HEK293T (cell line): ENCODE measurements at regions of chr18 and their contacts with region 1.

Region 1: GRCh38 chr18:22348521-22349316 is 69.0 kb downstream of the CTAGE1 start:
- DNase-seq: peak; percentile 57

Region 2: DNA sequence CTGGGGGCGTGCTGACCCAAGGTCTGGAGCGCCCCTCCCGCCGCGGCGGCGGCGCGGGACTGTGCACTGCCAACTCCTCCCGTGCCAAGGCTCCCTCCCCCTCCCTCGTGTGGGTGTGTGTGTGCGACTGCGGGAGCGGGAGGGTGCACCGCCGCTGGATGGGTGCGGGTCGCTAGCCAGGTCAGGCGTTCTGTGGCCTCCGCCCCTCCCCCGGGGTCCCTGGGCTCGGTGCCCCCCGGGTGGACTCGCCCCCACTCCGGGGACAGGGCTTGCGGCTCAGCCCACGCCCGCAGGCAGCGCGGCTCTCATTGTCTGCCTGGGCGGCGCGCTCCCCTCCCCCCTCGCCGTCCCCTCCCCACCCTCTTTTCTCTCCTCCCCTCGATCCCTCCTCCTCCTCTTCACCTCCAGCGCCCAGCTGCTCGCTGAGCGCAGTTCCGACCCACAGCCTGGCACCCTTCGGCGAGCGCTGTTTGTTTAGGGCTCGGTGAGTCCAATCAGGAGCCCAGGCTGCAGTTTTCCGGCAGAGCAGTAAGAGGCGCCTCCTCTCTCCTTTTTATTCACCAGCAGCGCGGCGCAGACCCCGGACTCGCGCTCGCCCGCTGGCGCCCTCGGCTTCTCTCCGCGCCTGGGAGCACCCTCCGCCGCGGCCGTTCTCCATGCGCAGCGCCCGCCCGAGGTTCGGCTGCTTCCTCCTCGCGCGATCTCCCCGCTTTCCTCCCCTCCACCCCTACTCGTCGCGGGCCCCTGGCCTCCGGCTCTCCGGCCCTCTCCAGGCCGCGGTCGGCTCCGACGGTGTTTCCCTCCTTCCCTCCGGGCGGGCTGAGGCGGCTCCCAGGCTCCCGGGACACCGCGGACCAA is 179.5 kb before region 1 on chr18 and contains the start of gene GATA6:
- CTCF ChIA-PET with region 1: no interaction called
- POLR2A ChIA-PET with region 1: interaction called, 15 read pairs
- DNase-seq: peak; percentile 90

Region 3: DNA sequence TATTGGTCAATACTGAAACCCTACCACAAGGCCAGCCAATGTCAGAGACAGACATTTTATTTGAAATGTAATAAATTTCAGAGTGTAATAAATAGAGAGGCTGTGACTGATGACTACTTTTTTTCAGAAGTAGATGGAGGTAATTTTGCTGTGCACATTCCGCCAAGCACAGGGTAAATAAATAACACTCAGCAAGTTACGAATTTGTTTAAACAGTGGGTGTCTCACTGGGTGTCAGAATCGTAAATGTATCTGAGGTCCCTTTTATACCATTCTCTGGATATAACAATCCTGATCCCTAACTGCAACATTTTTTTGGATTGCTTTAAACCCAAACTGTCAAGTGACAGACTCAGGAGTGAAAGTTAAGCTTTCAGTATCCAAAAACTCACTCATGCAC is 105.2 kb before region 1 on chr18:
- CTCF ChIA-PET with region 1: no interaction called
- POLR2A ChIA-PET with region 1: no interaction called
- DNase-seq: no peak

Region 4: GRCh38 chr18:22300665-22301636 is 47.8 kb before region 1 on chr18:
- CTCF ChIA-PET with region 1: no interaction called
- POLR2A ChIA-PET with region 1: no interaction called
- DNase-seq: no peak